ENCODE measurements at regions of chr18 and their contacts with region 1.

Region 1: DNA sequence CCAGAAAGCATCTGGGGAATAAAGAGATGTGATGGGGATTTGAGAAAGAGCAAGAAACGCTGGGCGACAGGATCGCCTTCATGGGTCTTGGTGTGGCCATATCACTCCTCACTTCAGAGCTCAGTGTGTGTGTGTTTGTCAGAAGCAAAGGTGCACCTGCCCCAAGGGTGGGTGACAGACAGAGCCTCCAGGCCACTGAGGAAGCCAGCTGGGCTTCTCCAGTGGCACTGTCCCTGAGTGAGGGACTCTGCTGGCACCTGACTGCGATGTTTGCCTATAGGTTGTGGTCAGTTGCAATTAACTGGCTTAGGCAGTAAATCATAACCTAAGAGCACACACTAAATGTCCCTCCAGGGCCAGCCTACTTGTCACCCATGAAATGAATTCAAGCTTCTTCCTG is 23.5 kb upstream of the GNAL start:
- DNase-seq: no peak
- H3K4me3 ChIP-seq: no peak overlapping the region
- H3K27ac ChIP-seq: no peak overlapping the region
- H3K4me1 ChIP-seq: no peaks in the 10 kb centered on the region
- H3K27me3 ChIP-seq: no peaks in the 10 kb centered on the region
- CTCF ChIP-seq: no peak
- POLR2A ChIP-seq: no peak

Region 2: DNA sequence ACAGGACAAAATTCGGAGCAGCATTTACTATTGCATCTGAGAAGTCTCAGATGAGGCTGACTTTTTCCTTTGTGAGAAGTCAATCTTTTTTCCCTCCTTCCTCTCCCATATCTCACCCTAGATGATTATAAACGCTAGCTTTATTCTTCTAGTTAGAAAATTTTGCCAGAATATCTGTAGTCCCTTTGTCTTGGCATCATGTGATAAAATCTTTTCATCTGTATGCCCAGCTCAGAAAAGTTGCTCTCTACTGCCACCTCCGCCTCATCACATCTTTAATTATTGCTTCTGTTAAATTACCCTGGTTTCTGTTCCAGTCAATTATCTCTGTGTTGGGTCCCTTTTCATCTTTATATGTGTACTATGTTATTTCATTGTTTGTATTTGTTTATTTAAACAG is 267.0 kb before region 1 on chr18:
- CTCF ChIA-PET with region 1: no interaction called
- POLR2A ChIA-PET with region 1: no interaction called
- dilution Hi-C with region 1: no loop called
- intact Hi-C with region 1: no loop called
- DNase-seq: no peak
- H3K4me3 ChIP-seq: no peak overlapping the region
- H3K27ac ChIP-seq: no peak overlapping the region
- H3K4me1 ChIP-seq: no peaks in the 10 kb centered on the region
- H3K27me3 ChIP-seq: no peaks in the 10 kb centered on the region
- CTCF ChIP-seq: peak in 1 of 2 donors; percentile 3
- POLR2A ChIP-seq: no peak

Region 3: DNA sequence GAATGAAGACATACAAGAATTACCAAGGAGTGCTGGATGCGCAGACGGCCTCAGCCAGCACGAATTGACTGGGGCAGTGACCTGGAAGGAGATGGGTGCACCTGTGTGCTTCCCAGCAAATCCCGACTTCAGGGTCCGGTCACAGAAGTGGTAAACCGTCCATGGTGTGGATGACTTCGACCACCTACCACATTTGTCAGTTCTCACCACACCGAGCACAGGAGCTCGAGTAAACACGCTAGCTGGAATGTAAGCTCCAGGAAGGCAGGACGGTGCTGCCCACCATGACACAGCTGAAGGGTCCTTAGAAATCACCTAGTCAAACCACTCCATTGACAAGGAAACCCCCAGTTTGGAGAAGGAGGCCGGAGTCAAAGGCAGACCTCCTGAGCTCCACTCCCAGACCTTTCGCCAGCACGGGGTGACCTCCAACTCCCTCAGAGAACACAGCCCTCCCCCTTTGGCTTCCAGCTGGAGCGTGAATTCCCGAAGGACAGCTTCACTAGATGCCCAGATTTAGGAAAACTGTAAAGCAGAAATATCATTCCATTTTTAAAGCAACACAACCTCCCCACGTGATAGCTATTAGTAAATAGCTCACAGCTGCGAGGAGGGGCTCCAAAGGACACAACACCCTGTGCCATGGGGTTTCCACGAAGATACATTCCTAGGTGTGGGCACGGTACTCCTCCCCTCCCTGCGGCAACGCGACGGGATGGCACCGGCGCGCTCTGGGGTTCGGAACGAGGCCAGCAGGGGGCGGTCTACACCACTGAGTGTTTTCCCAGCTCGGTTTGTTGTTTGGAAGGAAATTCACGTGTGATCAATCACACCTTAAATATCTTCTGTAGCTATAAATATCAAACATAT is 10.6 kb before region 1 on chr18:
- CTCF ChIA-PET with region 1: interaction called, 22 read pairs
- POLR2A ChIA-PET with region 1: no interaction called
- dilution Hi-C with region 1: no loop called
- intact Hi-C with region 1: no loop called
- DNase-seq: peak; percentile 32
- H3K4me3 ChIP-seq: no peak overlapping the region
- H3K27ac ChIP-seq: no peak overlapping the region
- H3K4me1 ChIP-seq: no peaks in the 10 kb centered on the region
- H3K27me3 ChIP-seq: peaks cover 0 to 2% of the 10 kb centered on the region in 2 experiments
- CTCF ChIP-seq: peak; percentile 80 to 84
- POLR2A ChIP-seq: no peak